Activated naive CD4-positive, alpha-beta T cell treated with anti-CD3 and anti-CD28 coated beads for 36 hours (primary cell): ENCODE measurements at regions of chr11 and their contacts with region 1.

Region 1: DNA sequence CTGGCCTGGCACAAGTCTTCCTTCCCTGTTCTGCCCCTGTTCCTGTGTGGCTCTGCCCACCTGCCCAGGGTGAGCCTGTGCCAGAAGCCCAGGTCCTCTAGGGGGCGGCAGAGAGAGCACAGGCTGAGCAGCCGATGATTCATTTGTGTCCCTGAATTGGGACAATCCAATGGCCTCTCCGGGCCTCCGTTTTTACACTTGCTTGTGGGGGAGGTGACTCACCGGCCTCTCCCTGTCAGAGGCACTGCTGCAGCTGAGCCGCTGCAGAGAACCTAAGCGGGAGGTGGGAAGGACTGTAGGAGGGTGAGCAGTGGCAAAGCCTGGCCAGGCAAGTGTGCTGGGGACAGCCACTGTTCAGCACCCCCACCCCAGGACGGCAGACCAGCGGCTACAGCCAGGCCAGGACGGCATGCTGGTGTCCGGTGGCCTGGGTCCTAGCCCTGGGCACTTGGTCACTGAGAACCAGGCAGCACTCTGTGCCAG is 65.2 kb upstream of the LMO1 start:
- DNase-seq: peak; percentile 92
- H3K4me3 Mint-ChIP-seq: no peak overlapping the region
- H3K27ac Mint-ChIP-seq: no peak overlapping the region
- H3K4me1 Mint-ChIP-seq: no peaks in the 10 kb centered on the region
- H3K27me3 Mint-ChIP-seq: peaks cover 16% of the 10 kb centered on the region

Region 2: GRCh38 chr11:8225589-8226036 is 103.3 kb before region 1 on chr11:
- CTCF ChIA-PET with region 1: no interaction called
- intact Hi-C with region 1: loop called (anchors 5 kb)
- DNase-seq: peak; percentile 75
- H3K4me3 Mint-ChIP-seq: no peak overlapping the region
- H3K27ac Mint-ChIP-seq: no peak overlapping the region
- H3K4me1 Mint-ChIP-seq: no peaks in the 10 kb centered on the region
- H3K27me3 Mint-ChIP-seq: no peaks in the 10 kb centered on the region

Region 3: DNA sequence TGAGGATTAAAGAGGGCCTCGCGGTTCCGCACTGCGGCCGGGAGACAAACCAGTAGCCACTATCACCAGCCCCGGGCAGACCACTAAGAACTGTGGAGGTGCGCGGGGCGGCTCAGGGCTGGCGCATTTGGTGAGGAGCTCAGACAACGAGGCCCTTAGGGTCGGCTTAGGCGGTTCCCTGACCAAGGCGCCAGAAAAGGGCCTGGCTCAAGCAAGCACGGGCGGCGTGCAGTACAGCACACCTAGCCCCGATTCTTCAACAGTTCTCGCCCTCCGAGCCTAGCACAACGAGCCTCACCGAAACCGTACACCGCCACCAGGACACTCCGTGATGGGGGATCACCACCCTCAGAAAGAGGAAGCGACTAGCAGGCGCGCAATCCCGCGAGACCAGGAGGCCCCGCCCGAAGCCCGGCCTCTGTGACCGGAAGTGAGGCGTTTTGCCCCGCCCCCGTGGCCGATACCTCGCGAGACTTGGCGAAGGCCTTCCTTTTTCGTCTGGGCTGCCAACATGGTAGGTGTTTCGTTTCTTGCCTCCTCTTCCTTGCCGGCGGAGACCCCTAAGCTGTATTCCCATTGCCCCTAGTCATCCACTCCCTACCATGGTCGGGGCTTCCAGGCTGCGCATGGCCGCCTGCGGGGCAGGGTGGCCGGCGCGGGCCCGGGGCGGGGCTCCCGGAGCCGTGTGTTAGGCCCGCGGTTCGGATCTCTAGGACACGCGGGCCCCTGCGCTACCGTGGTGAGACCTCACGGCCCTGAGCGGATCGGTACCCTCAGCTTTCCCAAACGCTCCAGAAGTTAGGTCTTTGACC is 353.6 kb after region 1 on chr11 and contains the starts of genes RPL27A and TRIM66:
- CTCF ChIA-PET with region 1: no interaction called
- intact Hi-C with region 1: loop called (anchors 2 kb)
- DNase-seq: peak; percentile 99
- H3K4me3 Mint-ChIP-seq: peak within 1 kb of the TSS; percentile 91
- H3K27ac Mint-ChIP-seq: peak within 1 kb of the TSS; percentile 92
- H3K4me1 Mint-ChIP-seq: peaks cover 42% of the 10 kb centered on the region
- H3K27me3 Mint-ChIP-seq: no peaks in the 10 kb centered on the region
- total RNA-seq, gene RPL27A: 1,157 to 1,188 TPM
- total RNA-seq, gene TRIM66: 16.4 to 19.1 TPM